Sigmoid colon (tissue), 7 donors: ENCODE measurements at regions of chr3 and their contacts with region 1.

Region 1: GRCh38 chr3:66038726-66039589 is at the start of gene MAGI1:
- DNase-seq: peak; percentile 96
- H3K4me3 ChIP-seq: peak within 1 kb of the TSS; percentile 62 to 83 (median 74)
- H3K27ac ChIP-seq: peak within 1 kb of the TSS; percentile 87 to 96 (median 92)
- H3K4me1 ChIP-seq: peaks cover 0 to 33% (median 24%) of the 10 kb centered on the region in 4 donors
- H3K27me3 ChIP-seq: no peaks in the 10 kb centered on the region
- CTCF ChIP-seq: no peak
- EP300 ChIP-seq: no peak
- POLR2A ChIP-seq: peak in 1 of 2 donors; percentile 26
- total RNA-seq, gene MAGI1: 29.8 to 54.0 (median 44.8) TPM

Region 2: DNA sequence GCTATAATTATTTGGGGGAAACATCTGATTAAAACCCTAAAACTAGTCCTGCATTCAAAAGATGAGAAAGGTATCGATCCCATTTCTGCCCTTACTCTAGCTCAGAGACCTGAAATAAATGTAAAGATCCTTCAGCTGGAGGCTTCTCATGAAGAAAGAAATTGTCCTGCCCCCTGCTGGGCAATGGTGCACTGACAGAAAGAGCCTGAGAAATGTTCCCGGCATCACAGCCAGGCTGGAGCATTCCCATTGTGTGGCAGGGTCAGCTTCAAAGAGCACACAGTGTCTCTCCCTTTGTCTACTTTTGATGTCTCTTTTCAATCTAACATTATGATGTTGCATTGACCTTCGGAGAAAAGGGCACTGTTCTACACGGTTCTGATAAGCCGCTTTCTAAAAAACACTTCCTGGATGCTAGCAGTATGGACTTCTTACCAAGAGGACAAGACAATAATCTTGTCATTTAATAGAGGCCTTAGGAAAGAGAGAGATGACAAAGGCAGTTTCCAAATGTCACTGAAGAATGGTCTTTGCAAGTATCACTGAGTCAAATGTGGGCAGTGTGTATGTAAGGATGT is 287.7 kb before region 1 on chr3:
- intact Hi-C with region 1: no loop called
- DNase-seq: no peak
- H3K4me3 ChIP-seq: no peak overlapping the region
- H3K27ac ChIP-seq: no peak overlapping the region
- H3K4me1 ChIP-seq: no peaks in the 10 kb centered on the region
- H3K27me3 ChIP-seq: no peaks in the 10 kb centered on the region
- CTCF ChIP-seq: peak in 2 of 4 experiments; percentile 38 to 50
- EP300 ChIP-seq: no peak
- POLR2A ChIP-seq: no peak

Region 3: GRCh38 chr3:65785065-65785645 is 253.8 kb before region 1 on chr3:
- intact Hi-C with region 1: loop called (anchors 5 kb)
- DNase-seq: no peak
- H3K4me3 ChIP-seq: no peak overlapping the region
- H3K27ac ChIP-seq: no peak overlapping the region
- H3K4me1 ChIP-seq: peaks cover 0 to 16% (median 9%) of the 10 kb centered on the region in 4 donors
- H3K27me3 ChIP-seq: no peaks in the 10 kb centered on the region
- CTCF ChIP-seq: peak; percentile 49 to 68 (median 58)
- EP300 ChIP-seq: no peak
- POLR2A ChIP-seq: no peak

Region 4: GRCh38 chr3:65894679-65895453 is 144.1 kb before region 1 on chr3:
- intact Hi-C with region 1: loop called (anchors 10 kb)
- DNase-seq: no peak
- H3K4me3 ChIP-seq: no peak overlapping the region
- H3K27ac ChIP-seq: no peak overlapping the region
- H3K4me1 ChIP-seq: peaks cover 0 to 7% (median 0%) of the 10 kb centered on the region in 4 donors
- H3K27me3 ChIP-seq: no peaks in the 10 kb centered on the region
- CTCF ChIP-seq: no peak
- EP300 ChIP-seq: no peak
- POLR2A ChIP-seq: no peak

Region 5: DNA sequence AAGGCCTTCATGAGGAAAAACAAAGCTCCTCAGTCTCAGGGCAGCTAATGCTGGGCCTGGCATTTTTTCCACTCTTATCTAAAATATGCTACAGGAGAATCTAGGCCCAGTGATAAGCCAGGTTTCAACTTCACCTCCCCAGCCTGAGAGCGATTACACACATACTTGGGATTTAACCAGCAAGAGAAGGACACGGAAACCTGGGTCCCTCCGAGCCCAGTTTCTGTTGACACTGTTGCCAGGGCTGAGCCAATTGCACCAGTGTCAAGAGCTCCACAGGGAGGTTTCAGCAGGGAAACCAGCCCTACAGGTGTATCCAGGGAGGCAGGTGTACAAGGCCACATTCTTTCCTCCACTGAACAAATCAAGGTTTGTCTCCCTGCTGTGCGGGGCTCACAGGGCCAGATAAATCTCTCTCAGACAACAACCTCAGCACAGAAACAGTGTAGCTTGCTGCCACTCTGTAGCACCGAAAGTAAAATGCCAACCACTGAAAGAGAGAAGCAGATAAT is 85.6 kb before region 1 on chr3:
- intact Hi-C with region 1: loop called (anchors 5 kb)
- DNase-seq: no peak
- H3K4me3 ChIP-seq: no peak overlapping the region
- H3K27ac ChIP-seq: peak overlapping the region; percentile 2 to 60 (median 17)
- H3K4me1 ChIP-seq: peaks cover 0 to 32% (median 24%) of the 10 kb centered on the region in 4 donors
- H3K27me3 ChIP-seq: no peaks in the 10 kb centered on the region
- CTCF ChIP-seq: no peak
- EP300 ChIP-seq: no peak
- POLR2A ChIP-seq: no peak

Region 6: GRCh38 chr3:66138336-66139313 is 99.7 kb after region 1 on chr3:
- intact Hi-C with region 1: loop called (anchors 5 kb)
- DNase-seq: peak; percentile 69
- H3K4me3 ChIP-seq: no peak overlapping the region
- H3K27ac ChIP-seq: no peak overlapping the region
- H3K4me1 ChIP-seq: no peaks in the 10 kb centered on the region
- H3K27me3 ChIP-seq: no peaks in the 10 kb centered on the region
- CTCF ChIP-seq: peak; percentile 22 to 81 (median 70)
- EP300 ChIP-seq: no peak
- POLR2A ChIP-seq: no peak

Region 7: GRCh38 chr3:66220602-66221377 is 181.8 kb after region 1 on chr3 and contains the start of gene SLC25A26:
- intact Hi-C with region 1: loop called (anchors 5 kb)
- DNase-seq: peak; percentile 98
- H3K4me3 ChIP-seq: peak within 1 kb of the TSS; percentile 68 to 89 (median 80)
- H3K27ac ChIP-seq: peak within 1 kb of the TSS; percentile 71 to 82 (median 76)
- H3K4me1 ChIP-seq: peaks cover 0 to 15% (median 8%) of the 10 kb centered on the region in 4 donors
- H3K27me3 ChIP-seq: no peaks in the 10 kb centered on the region
- CTCF ChIP-seq: no peak
- EP300 ChIP-seq: no peak
- POLR2A ChIP-seq: peak in 1 of 2 donors; percentile 13
- total RNA-seq, gene SLC25A26: 22.4 to 42.8 (median 28.9) TPM